GM18951 (cell line): ENCODE measurements at regions of chr16 and their contacts with region 1.

Region 1: GRCh38 chr16:21184834-21185233 is 26.4 kb downstream of the LDAF1 start:
- POLR2A ChIP-seq: no peak

Region 2: GRCh38 chr16:21574381-21574780 is 389.5 kb after region 1 on chr16:
- in situ Hi-C with region 1: loop called (anchors 10 kb)
- POLR2A ChIP-seq: no peak